Sigmoid colon (tissue), 7 donors: ENCODE measurements at regions of chr20 and their contacts with region 1.

Region 1: GRCh38 chr20:44137210-44137801 is 49.7 kb downstream of the JPH2 start:
- DNase-seq: peak; percentile 94
- H3K4me3 ChIP-seq: peak overlapping the region in 2 of 4 donors; percentile 9 to 11
- H3K27ac ChIP-seq: peak overlapping the region; percentile 80 to 92 (median 92)
- H3K4me1 ChIP-seq: peaks cover 0 to 74% (median 68%) of the 10 kb centered on the region in 4 donors
- H3K27me3 ChIP-seq: no peaks in the 10 kb centered on the region
- CTCF ChIP-seq: no peak
- EP300 ChIP-seq: peak in 3 of 4 donors; percentile 34 to 79 (median 78)
- POLR2A ChIP-seq: no peak

Region 2: GRCh38 chr20:44018259-44018941 is 118.9 kb before region 1 on chr20:
- intact Hi-C with region 1: no loop called
- DNase-seq: peak; percentile 91
- H3K4me3 ChIP-seq: peak overlapping the region in 2 of 4 donors; percentile 6 to 13
- H3K27ac ChIP-seq: peak overlapping the region; percentile 76 to 87 (median 81)
- H3K4me1 ChIP-seq: peaks cover 0 to 60% (median 42%) of the 10 kb centered on the region in 4 donors
- H3K27me3 ChIP-seq: peaks cover 0 to 3% (median 0%) of the 10 kb centered on the region in 3 donors
- CTCF ChIP-seq: no peak
- EP300 ChIP-seq: peak; percentile 28 to 87 (median 50)
- POLR2A ChIP-seq: no peak

Region 3: GRCh38 chr20:44181611-44182010 is 44.3 kb after region 1 on chr20:
- intact Hi-C with region 1: loop called (anchors 2 kb)
- DNase-seq: no peak
- H3K4me3 ChIP-seq: peak overlapping the region in 3 of 4 donors; percentile 60 to 80 (median 73)
- H3K27ac ChIP-seq: peak overlapping the region; percentile 91 to 99 (median 95)
- H3K4me1 ChIP-seq: peaks cover 0 to 76% (median 54%) of the 10 kb centered on the region in 4 donors
- H3K27me3 ChIP-seq: no peaks in the 10 kb centered on the region
- CTCF ChIP-seq: no peak
- EP300 ChIP-seq: peak in 1 of 4 donors; percentile 46
- POLR2A ChIP-seq: no peak